Mammary epithelial cell (primary cell): ENCODE measurements at regions of chr12 and their contacts with region 1.

Region 1: GRCh38 chr12:116241157-116241772 is 36.2 kb downstream of the MED13L start:
- DNase-seq: peak; percentile 70
- H3K4me3 ChIP-seq: no peak overlapping the region
- H3K27ac ChIP-seq: peak overlapping the region; percentile 8
- H3K4me1 ChIP-seq: peaks cover 16% of the 10 kb centered on the region
- H3K27me3 ChIP-seq: no peaks in the 10 kb centered on the region
- CTCF ChIP-seq: no peak

Region 2: GRCh38 chr12:116006141-116006540 is 235.1 kb before region 1 on chr12:
- CTCF ChIA-PET with region 1: no interaction called
- dilution Hi-C with region 1: no loop called
- in situ Hi-C with region 1: no loop called
- intact Hi-C with region 1: no loop called
- DNase-seq: no peak
- H3K4me3 ChIP-seq: no peak overlapping the region
- H3K27ac ChIP-seq: no peak overlapping the region
- H3K4me1 ChIP-seq: no peaks in the 10 kb centered on the region
- H3K27me3 ChIP-seq: no peaks in the 10 kb centered on the region
- CTCF ChIP-seq: no peak

Region 3: DNA sequence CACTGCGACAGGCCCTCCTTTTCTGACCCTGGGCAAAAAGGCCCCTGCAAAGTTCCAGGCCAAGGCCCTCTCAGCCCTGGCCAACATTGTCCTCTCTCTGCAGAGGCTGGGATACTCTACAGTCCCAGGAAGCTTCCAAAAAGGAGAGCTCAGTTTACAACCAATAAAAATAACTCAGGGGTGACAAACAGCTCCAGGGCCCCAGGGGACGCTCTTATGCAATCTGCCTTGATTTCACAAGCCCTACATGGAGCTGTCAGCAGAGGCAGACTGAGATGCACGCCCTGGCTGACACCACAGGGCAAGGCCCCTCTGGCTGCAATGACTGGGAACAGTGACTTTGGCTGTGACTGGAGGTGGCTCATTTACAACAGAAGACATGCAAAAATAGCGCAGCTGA is 165.3 kb after region 1 on chr12:
- CTCF ChIA-PET with region 1: no interaction called
- dilution Hi-C with region 1: no loop called
- in situ Hi-C with region 1: no loop called
- intact Hi-C with region 1: no loop called
- DNase-seq: peak; percentile 78
- H3K4me3 ChIP-seq: no peak overlapping the region
- H3K27ac ChIP-seq: no peak overlapping the region
- H3K4me1 ChIP-seq: peaks cover 16% of the 10 kb centered on the region
- H3K27me3 ChIP-seq: no peaks in the 10 kb centered on the region
- CTCF ChIP-seq: peak in 1 of 2 donors; percentile 24

Region 4: DNA sequence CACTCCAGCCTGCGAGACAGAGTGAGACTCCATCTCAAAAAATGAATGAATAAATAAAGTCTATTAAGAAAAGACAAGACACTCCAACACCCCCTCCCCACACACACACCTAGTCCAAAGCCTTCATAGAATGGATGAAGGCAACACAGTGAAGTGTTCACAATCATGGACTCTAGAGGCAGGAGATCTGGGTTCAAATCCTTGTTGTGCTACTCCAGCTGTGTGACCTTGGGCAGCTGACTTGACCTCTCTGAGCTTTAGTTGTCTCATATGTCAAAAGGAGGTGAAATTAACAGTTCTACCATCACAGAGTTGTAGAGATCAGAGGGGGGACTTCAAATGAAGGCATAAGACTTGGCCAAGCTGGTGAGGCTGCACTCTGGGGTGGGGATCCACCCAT is 222.1 kb after region 1 on chr12:
- CTCF ChIA-PET with region 1: interaction called, 11 read pairs
- dilution Hi-C with region 1: no loop called
- in situ Hi-C with region 1: no loop called
- intact Hi-C with region 1: no loop called
- DNase-seq: no peak
- H3K4me3 ChIP-seq: no peak overlapping the region
- H3K27ac ChIP-seq: no peak overlapping the region
- H3K4me1 ChIP-seq: no peaks in the 10 kb centered on the region
- H3K27me3 ChIP-seq: no peaks in the 10 kb centered on the region
- CTCF ChIP-seq: no peak